Naive thymus-derived CD4-positive, alpha-beta T cell (primary cell): ENCODE measurements at regions of chr7 and their contacts with region 1.

Region 1: GRCh38 chr7:6323967-6324701 is 51.7 kb upstream of the CYTH3 start:
- DNase-seq: no peak
- ATAC-seq: no peak
- H3K4me3 ChIP-seq: no peak overlapping the region
- H3K4me3 Mint-ChIP-seq: no peak overlapping the region
- H3K27ac ChIP-seq: no peak overlapping the region
- H3K27ac Mint-ChIP-seq: no peak overlapping the region
- H3K4me1 ChIP-seq: no peaks in the 10 kb centered on the region
- H3K4me1 Mint-ChIP-seq: peaks cover 3 to 6% (median 5%) of the 10 kb centered on the region in 7 donors
- H3K27me3 ChIP-seq: no peaks in the 10 kb centered on the region
- H3K27me3 Mint-ChIP-seq: peaks cover 0 to 3% (median 0%) of the 10 kb centered on the region in 5 donors

Region 2: DNA sequence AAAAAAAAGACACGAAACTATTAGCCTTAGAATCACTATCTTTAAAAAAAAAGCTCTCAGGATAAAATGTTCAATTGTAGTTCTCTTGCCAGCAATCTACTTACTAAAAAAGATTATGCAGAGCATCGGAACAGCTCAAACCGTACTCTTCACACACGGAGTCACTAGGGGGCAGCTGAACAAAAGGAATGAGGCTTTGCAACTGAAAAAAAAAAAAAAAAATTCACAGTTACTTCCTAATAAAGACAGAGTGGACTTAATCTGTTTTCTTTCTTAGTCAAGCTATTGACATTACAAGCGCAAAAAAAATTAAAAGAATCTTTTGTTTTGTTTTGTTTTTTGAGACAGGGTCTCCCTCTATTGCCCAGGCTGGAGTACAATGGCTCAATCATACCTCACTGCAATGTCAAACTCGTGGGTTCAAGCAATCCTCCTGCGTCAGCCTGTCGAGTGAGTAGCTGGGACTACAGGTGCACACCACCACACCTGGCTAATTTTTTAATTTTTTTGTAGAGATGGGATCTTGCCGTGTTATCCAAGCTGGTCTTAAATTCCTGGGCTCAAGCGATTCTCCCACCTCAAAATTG is 326.8 kb before region 1 on chr7:
- CTCF ChIA-PET with region 1: interaction called, 18 read pairs
- POLR2A ChIA-PET with region 1: interaction called, 3 read pairs
- intact Hi-C with region 1: loop called in 1 of 2 experiments (anchors 5 kb)
- DNase-seq: peak in 7 of 9 donors; percentile 32 to 69 (median 54)
- ATAC-seq: peak; percentile 82
- H3K4me3 ChIP-seq: no peak overlapping the region
- H3K4me3 Mint-ChIP-seq: no peak overlapping the region
- H3K27ac ChIP-seq: no peak overlapping the region
- H3K27ac Mint-ChIP-seq: peak overlapping the region in 4 of 9 donors; percentile 8 to 44 (median 40)
- H3K4me1 ChIP-seq: no peaks in the 10 kb centered on the region
- H3K4me1 Mint-ChIP-seq: peaks cover 0 to 4% (median 0%) of the 10 kb centered on the region in 7 donors
- H3K27me3 ChIP-seq: no peaks in the 10 kb centered on the region
- H3K27me3 Mint-ChIP-seq: no peaks in the 10 kb centered on the region

Region 3: GRCh38 chr7:6160191-6160623 is 163.9 kb before region 1 on chr7:
- CTCF ChIA-PET with region 1: interaction called, 5 read pairs
- POLR2A ChIA-PET with region 1: no interaction called
- intact Hi-C with region 1: loop called in 1 of 2 experiments (anchors 1 kb)
- DNase-seq: peak in 1 of 9 donors; percentile 10
- ATAC-seq: peak; percentile 42
- H3K4me3 ChIP-seq: no peak overlapping the region
- H3K4me3 Mint-ChIP-seq: no peak overlapping the region
- H3K27ac ChIP-seq: no peak overlapping the region
- H3K27ac Mint-ChIP-seq: peak overlapping the region in 1 of 9 donors; percentile 22
- H3K4me1 ChIP-seq: no peaks in the 10 kb centered on the region
- H3K4me1 Mint-ChIP-seq: peaks cover 0 to 11% (median 0%) of the 10 kb centered on the region in 7 donors
- H3K27me3 ChIP-seq: no peaks in the 10 kb centered on the region
- H3K27me3 Mint-ChIP-seq: no peaks in the 10 kb centered on the region

Region 4: GRCh38 chr7:6338551-6339274 is 14.6 kb after region 1 on chr7:
- CTCF ChIA-PET with region 1: interaction called, 14 read pairs
- POLR2A ChIA-PET with region 1: no interaction called
- intact Hi-C with region 1: no loop called
- DNase-seq: no peak
- ATAC-seq: no peak
- H3K4me3 ChIP-seq: no peak overlapping the region
- H3K4me3 Mint-ChIP-seq: no peak overlapping the region
- H3K27ac ChIP-seq: no peak overlapping the region
- H3K27ac Mint-ChIP-seq: no peak overlapping the region
- H3K4me1 ChIP-seq: peaks cover 0 to 3% of the 10 kb centered on the region in 2 donors
- H3K4me1 Mint-ChIP-seq: peaks cover 4 to 26% (median 19%) of the 10 kb centered on the region in 7 donors
- H3K27me3 ChIP-seq: no peaks in the 10 kb centered on the region
- H3K27me3 Mint-ChIP-seq: no peaks in the 10 kb centered on the region

Region 5: GRCh38 chr7:6435486-6436384 is 111.6 kb after region 1 on chr7:
- CTCF ChIA-PET with region 1: interaction called, 3 read pairs
- POLR2A ChIA-PET with region 1: no interaction called
- intact Hi-C with region 1: loop called in 1 of 2 experiments (anchors 1 kb)
- DNase-seq: peak; percentile 80 to 95 (median 89)
- ATAC-seq: peak; percentile 96
- H3K4me3 ChIP-seq: peak overlapping the region; percentile 34
- H3K4me3 Mint-ChIP-seq: peak overlapping the region; percentile 75 to 90 (median 84)
- H3K27ac ChIP-seq: peak overlapping the region; percentile 70
- H3K27ac Mint-ChIP-seq: peak overlapping the region; percentile 81 to 97 (median 91)
- H3K4me1 ChIP-seq: peaks cover 6 to 27% of the 10 kb centered on the region in 2 donors
- H3K4me1 Mint-ChIP-seq: peaks cover 29 to 59% (median 53%) of the 10 kb centered on the region in 7 donors
- H3K27me3 ChIP-seq: no peaks in the 10 kb centered on the region
- H3K27me3 Mint-ChIP-seq: no peaks in the 10 kb centered on the region

Region 6: DNA sequence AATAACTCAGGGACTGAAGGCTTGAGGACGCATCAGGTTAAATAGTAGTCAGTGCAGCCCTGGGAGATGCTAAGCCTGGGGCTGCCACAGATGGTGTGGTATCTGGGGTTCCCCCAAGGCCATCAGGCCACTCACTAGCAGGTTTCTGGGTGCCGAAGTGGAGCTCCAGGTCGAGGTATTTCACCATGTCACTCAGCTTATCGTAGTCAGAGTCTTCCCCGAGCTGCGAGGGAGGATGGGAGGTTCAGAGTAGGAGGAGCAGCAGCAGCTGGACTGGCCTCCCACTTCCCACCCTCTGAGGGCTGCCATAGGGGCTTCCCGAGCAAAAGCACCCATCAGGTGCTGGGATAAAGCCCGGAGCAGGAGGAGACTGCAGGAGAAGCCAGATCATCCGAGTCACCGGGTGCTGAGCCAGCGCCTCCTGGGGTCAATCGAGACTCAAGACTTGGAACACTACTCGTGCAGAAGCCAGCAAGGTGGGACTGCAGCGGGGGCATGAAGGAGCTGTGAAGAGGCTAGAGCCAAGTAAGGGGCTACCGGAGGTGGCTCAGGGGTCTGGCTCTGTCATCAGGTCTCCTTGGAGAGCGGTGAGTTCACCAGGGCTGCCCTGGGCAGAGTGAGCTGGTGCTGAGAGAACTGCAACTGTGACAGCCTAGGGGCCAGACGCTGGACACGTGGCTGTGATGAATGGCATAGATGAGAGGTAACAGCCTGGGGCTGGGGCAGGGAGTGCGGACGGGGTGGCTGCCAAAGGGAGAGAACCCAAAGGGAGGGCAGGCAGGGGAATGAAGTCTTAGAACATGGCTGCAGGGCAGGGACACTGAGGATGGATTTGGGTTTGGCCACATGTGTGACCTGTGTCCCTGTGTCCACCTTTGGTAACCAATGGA is 181.8 kb after region 1 on chr7:
- CTCF ChIA-PET with region 1: no interaction called
- POLR2A ChIA-PET with region 1: no interaction called
- intact Hi-C with region 1: no loop called
- DNase-seq: no peak
- ATAC-seq: no peak
- H3K4me3 ChIP-seq: no peak overlapping the region
- H3K4me3 Mint-ChIP-seq: peak overlapping the region in 3 of 10 donors; percentile 25 to 92 (median 50)
- H3K27ac ChIP-seq: no peak overlapping the region
- H3K27ac Mint-ChIP-seq: peak overlapping the region in 1 of 9 donors; percentile 29
- H3K4me1 ChIP-seq: peaks cover 4 to 6% of the 10 kb centered on the region in 2 donors
- H3K4me1 Mint-ChIP-seq: peaks cover 0 to 9% (median 4%) of the 10 kb centered on the region in 7 donors
- H3K27me3 ChIP-seq: no peaks in the 10 kb centered on the region
- H3K27me3 Mint-ChIP-seq: peaks cover 0 to 2% (median 0%) of the 10 kb centered on the region in 5 donors